ENCODE measurements at regions of chr21 and their contacts with region 1.

Region 1: GRCh38 chr21:44510508-44511210 is 29.3 kb downstream of the KRTAP10-1 start:
- DNase-seq: peak; percentile 68 to 94 (median 84)
- ATAC-seq: peak; percentile 94 to 99
- H3K4me3 Mint-ChIP-seq: peak overlapping the region; percentile 24 to 64 (median 46)
- H3K27ac Mint-ChIP-seq: peak overlapping the region in 4 of 10 donors; percentile 10 to 45 (median 32)
- H3K4me1 Mint-ChIP-seq: peaks cover 0 to 14% (median 4%) of the 10 kb centered on the region in 4 donors
- H3K27me3 Mint-ChIP-seq: no peaks in the 10 kb centered on the region

Region 2: GRCh38 chr21:44637018-44637850 is 126.6 kb after region 1 on chr21 and contains the start of gene KRTAP10-10:
- POLR2A ChIA-PET with region 1: no interaction called
- DNase-seq: no peak
- ATAC-seq: no peak
- H3K4me3 Mint-ChIP-seq: no peak within 1 kb of the TSS
- H3K27ac Mint-ChIP-seq: peak within 1 kb of the TSS in 5 of 10 donors; percentile 27 to 91 (median 77)
- H3K4me1 Mint-ChIP-seq: peaks cover 0 to 14% (median 5%) of the 10 kb centered on the region in 4 donors
- H3K27me3 Mint-ChIP-seq: peaks cover 0 to 6% (median 0%) of the 10 kb centered on the region in 5 donors
- polyA plus RNA-seq, gene KRTAP10-10: not detected

Region 3: GRCh38 chr21:44742418-44743153 is 231.9 kb after region 1 on chr21:
- POLR2A ChIA-PET with region 1: interaction called, 12 read pairs
- DNase-seq: peak in 3 of 10 donors; percentile 43 to 54 (median 46)
- ATAC-seq: peak in 1 of 2 donors; percentile 53
- H3K4me3 Mint-ChIP-seq: no peak overlapping the region
- H3K27ac Mint-ChIP-seq: peak overlapping the region in 8 of 10 donors; percentile 40 to 93 (median 65)
- H3K4me1 Mint-ChIP-seq: peaks cover 4 to 11% (median 6%) of the 10 kb centered on the region in 4 donors
- H3K27me3 Mint-ChIP-seq: peaks cover 0 to under 1% (median 0%) of the 10 kb centered on the region in 5 donors

Region 4: GRCh38 chr21:44792702-44793591 is 282.3 kb after region 1 on chr21:
- POLR2A ChIA-PET with region 1: interaction called, 10 read pairs
- DNase-seq: peak; percentile 41 to 78 (median 58)
- ATAC-seq: peak; percentile 96
- H3K4me3 Mint-ChIP-seq: peak overlapping the region in 2 of 10 donors; percentile 15 to 22
- H3K27ac Mint-ChIP-seq: peak overlapping the region; percentile 25 to 85 (median 56)
- H3K4me1 Mint-ChIP-seq: peaks cover 19 to 61% (median 56%) of the 10 kb centered on the region in 4 donors
- H3K27me3 Mint-ChIP-seq: no peaks in the 10 kb centered on the region

Measured in naive thymus-derived CD8-positive, alpha-beta T cell (primary cell).